ENCODE measurements at regions of chr2 and their contacts with region 1.

Region 1: GRCh38 chr2:63888490-63889402 is 47.0 kb downstream of the UGP2 start:
- DNase-seq: peak; percentile 41
- H3K4me3 ChIP-seq: no peak overlapping the region
- H3K27ac ChIP-seq: no peak overlapping the region
- H3K4me1 ChIP-seq: no peaks in the 10 kb centered on the region
- H3K27me3 ChIP-seq: no peaks in the 10 kb centered on the region
- CTCF ChIP-seq: peak; percentile 79 to 81

Region 2: DNA sequence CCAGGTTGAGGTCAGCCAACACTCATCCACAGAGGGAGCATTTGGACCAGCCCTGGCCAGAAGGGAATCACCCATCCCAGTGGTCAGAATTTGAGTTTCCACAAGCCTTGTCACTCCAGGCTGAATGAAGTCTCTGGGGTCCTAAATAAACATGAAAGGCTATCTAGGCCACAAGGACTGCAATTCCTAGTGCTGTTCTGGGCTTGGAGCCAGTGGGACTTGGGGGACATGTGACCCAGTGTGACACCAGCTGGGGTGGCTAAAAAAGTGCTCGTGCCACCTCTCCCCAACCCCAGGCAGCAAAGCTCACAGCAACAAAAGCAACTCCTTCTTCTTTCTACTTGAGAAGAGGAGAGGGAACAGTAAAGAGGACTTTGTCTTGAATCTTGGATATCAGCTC is 208.3 kb before region 1 on chr2:
- CTCF ChIA-PET with region 1: no interaction called
- dilution Hi-C with region 1: no loop called
- in situ Hi-C with region 1: loop called (anchors 10 kb)
- intact Hi-C with region 1: no loop called
- DNase-seq: no peak
- H3K4me3 ChIP-seq: no peak overlapping the region
- H3K27ac ChIP-seq: no peak overlapping the region
- H3K4me1 ChIP-seq: peaks cover 5% of the 10 kb centered on the region
- H3K27me3 ChIP-seq: no peaks in the 10 kb centered on the region
- CTCF ChIP-seq: no peak

Region 3: DNA sequence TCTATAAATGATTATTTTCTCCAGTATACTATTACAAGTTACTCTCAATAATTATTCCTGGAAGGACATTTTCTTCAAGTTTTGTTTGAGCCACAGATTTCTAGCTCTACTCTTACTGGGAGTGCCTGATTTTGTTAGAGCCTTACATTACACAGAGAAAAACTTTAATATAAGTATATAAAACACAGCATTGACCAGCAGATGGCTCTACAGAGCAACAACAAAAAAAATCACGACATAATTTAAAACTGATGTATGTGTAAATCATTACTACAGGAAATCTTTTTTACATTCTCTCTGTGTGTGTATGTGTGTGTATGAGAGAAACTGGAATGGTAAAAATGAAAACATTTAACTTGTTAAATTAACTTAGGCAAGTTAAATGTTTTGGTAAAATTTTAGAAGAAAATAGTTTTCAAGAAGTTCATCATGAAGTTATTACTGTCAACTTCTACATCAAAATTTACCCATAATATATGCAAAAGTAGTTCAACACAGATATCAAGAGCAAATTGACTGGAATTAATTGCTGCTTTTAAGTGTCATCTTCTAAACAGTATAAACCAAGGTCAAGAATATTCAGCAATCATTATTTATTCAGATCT is 196.6 kb before region 1 on chr2:
- CTCF ChIA-PET with region 1: no interaction called
- dilution Hi-C with region 1: no loop called
- in situ Hi-C with region 1: loop called (anchors 10 kb)
- intact Hi-C with region 1: loop called (anchors 1 kb)
- DNase-seq: peak; percentile 25
- H3K4me3 ChIP-seq: no peak overlapping the region
- H3K27ac ChIP-seq: no peak overlapping the region
- H3K4me1 ChIP-seq: peaks cover 8% of the 10 kb centered on the region
- H3K27me3 ChIP-seq: no peaks in the 10 kb centered on the region
- CTCF ChIP-seq: peak; percentile 36 to 53

Region 4: DNA sequence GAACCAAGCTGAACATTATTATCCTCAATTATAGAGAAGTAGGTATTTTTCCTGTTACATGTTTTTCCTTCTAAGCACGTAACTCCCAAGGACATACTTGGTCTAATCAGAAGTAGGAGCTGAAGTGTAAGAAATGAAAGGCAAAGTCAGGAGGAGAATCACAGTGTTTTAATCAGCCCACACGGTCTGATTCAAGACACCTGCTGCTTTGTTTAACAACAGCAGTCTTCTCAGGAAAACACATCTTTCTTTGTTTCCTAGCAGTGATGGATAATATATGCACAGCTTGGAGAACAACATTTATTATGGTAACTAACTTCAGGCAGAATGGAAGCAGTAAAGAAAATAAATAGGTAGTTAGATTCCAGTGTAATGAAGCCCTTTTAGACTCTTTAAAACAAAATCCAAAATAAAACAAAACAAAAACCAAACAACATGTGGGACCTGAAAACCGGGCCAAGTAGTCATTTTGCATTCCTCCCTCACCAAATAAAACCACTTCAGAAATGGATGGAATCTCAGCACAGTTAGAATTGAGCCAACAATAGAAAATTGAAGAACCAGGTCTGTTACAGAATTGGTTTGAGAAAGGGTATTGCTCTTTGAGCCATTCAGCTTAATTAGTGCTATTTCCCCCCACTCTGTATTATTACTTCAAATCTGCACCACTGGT is 108.1 kb before region 1 on chr2:
- CTCF ChIA-PET with region 1: no interaction called
- dilution Hi-C with region 1: no loop called
- in situ Hi-C with region 1: no loop called
- intact Hi-C with region 1: loop called (anchors 5 kb)
- DNase-seq: no peak
- H3K4me3 ChIP-seq: no peak overlapping the region
- H3K27ac ChIP-seq: no peak overlapping the region
- H3K4me1 ChIP-seq: no peaks in the 10 kb centered on the region
- H3K27me3 ChIP-seq: no peaks in the 10 kb centered on the region
- CTCF ChIP-seq: no peak

Region 5: GRCh38 chr2:63861220-63861822 is 27.4 kb before region 1 on chr2:
- CTCF ChIA-PET with region 1: no interaction called
- dilution Hi-C with region 1: no loop called
- in situ Hi-C with region 1: no loop called
- intact Hi-C with region 1: loop called (anchors 2 kb)
- DNase-seq: no peak
- H3K4me3 ChIP-seq: no peak overlapping the region
- H3K27ac ChIP-seq: no peak overlapping the region
- H3K4me1 ChIP-seq: peaks cover 40% of the 10 kb centered on the region
- H3K27me3 ChIP-seq: no peaks in the 10 kb centered on the region
- CTCF ChIP-seq: peak; percentile 40 to 57

Region 6: DNA sequence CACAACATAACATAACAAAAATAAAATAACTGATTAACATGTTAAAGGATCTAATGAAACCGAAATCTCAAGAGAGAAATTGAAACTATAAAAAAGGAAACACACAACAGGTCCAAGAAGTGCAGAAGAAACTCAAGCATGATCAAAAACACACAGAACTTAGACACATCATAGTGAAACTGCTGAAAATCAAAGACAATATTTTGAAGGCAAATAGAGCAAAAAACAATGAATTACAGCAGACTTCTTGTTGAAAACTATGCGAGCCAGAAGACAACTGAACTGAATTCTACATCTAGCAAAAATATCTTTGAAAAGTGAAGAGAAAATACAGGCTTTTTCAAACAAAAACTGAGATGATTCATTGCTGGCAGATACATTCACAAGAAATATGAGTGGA is 14.3 kb after region 1 on chr2:
- CTCF ChIA-PET with region 1: no interaction called
- dilution Hi-C with region 1: no loop called
- in situ Hi-C with region 1: no loop called
- intact Hi-C with region 1: no loop called
- DNase-seq: peak; percentile 5
- H3K4me3 ChIP-seq: no peak overlapping the region
- H3K27ac ChIP-seq: no peak overlapping the region
- H3K4me1 ChIP-seq: no peaks in the 10 kb centered on the region
- H3K27me3 ChIP-seq: no peaks in the 10 kb centered on the region
- CTCF ChIP-seq: no peak

Measured in mammary epithelial cell (primary cell).